AG04450 (cell line): ENCODE measurements at regions of chr17 and their contacts with region 1.

Region 1: GRCh38 chr17:82668631-82669099 is 20.4 kb upstream of the WDR45B start:
- DNase-seq: peak; percentile 18
- H3K4me3 ChIP-seq: no peak overlapping the region
- H3K27ac ChIP-seq: no peak overlapping the region
- H3K27me3 ChIP-seq: no peaks in the 10 kb centered on the region
- CTCF ChIP-seq: peak; percentile 56

Region 2: GRCh38 chr17:82716203-82717010 is 47.7 kb after region 1 on chr17 and contains the start of gene FN3KRP:
- CTCF ChIA-PET with region 1: interaction called, 3 read pairs
- POLR2A ChIA-PET with region 1: interaction called, 10 read pairs
- DNase-seq: peak; percentile 51
- H3K4me3 ChIP-seq: peak within 1 kb of the TSS; percentile 80
- H3K27ac ChIP-seq: no peak within 1 kb of the TSS
- H3K27me3 ChIP-seq: no peaks in the 10 kb centered on the region
- CTCF ChIP-seq: no peak
- polyA plus RNA-seq, gene FN3KRP: 15.1 and 16.4 TPM in 2 replicates

Region 3: DNA sequence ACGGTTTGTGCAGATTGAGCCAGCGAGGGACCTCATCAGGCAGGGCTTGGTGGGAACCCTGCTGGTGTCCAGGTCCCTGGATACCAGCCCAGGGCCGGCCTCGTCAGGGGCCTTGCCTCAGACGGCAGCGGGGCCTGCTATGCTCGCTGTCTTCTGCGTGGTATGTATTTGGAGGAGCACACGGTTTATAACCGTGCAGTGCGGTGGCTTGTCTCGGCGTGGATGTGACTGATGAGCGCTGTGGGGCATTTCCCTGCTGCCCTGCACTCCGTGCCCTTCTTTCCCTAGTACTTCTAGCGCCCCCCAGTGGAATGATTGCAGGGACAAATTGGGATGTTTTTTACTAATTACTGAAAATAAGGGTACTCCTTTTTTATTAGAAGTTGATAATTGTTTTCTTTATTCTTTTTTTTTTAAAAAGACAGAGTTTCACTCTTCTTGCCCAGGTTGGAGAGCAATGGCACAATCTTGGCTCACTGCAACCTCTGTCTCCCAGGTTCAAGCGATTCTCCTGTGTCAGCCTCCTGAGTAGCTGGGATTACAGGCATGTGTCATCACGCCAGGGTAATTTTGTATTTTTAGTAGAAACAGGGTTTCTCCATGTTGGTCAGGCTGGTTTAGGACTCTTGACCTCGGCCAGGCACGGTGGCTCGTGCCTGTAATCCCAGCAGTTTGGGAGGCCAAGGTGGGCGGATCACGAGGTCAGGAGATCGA is 98.5 kb after region 1 on chr17:
- CTCF ChIA-PET with region 1: interaction called, 15 read pairs
- POLR2A ChIA-PET with region 1: no interaction called
- DNase-seq: no peak
- H3K4me3 ChIP-seq: no peak overlapping the region
- H3K27ac ChIP-seq: no peak overlapping the region
- H3K27me3 ChIP-seq: no peaks in the 10 kb centered on the region
- CTCF ChIP-seq: peak; percentile 62